Panc1 (cell line): ENCODE measurements at regions of chr15 and their contacts with region 1.

Region 1: DNA sequence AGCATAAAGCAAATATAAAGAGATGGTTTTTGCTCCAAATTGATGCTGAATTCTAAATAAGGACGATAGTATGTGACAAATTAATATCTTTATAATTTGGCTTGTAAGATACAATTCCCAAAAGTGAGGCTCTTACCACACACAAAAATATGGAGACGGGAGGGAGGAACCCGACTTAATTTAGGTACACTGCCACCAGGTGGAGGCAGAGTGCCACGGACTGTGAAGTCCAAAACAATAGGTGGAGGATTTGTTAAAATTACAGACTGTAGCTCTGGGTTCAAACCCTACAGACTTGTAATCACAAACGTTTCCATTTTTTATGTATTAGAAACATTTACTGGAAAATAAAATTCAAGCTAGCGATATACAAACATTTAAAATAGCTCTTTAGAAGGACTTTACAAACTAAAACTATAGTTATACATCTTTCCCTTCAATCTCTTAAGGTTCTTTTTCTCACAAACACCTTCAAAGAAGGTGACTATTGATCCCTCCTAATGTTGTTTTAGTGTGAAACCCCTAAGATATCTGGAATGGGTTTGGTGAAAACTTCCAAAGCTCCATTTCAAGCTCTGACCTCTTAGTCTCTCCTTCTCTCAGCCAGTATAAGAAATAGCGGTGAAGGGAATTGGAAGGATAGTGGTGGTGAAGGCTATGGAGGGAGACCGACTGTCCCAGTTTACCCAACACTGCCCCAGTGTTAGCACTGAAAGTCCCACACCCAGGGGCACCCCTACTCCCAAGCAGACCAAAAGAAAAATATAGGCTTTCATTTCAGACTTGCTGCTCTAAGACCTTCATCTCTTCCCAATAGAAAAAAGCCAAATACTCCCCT is 89.7 kb downstream of the AQP9 start:
- DNase-seq: peak; percentile 67
- ATAC-seq: peak; percentile 88
- H3K4me3 ChIP-seq: no peak overlapping the region
- H3K27ac ChIP-seq: no peak overlapping the region
- H3K4me1 ChIP-seq: peaks cover 3% of the 10 kb centered on the region; the same call in 1 of the 2 replicates
- H3K27me3 ChIP-seq: no peaks in the 10 kb centered on the region
- CTCF ChIP-seq: peak; percentile 91

Region 2: DNA sequence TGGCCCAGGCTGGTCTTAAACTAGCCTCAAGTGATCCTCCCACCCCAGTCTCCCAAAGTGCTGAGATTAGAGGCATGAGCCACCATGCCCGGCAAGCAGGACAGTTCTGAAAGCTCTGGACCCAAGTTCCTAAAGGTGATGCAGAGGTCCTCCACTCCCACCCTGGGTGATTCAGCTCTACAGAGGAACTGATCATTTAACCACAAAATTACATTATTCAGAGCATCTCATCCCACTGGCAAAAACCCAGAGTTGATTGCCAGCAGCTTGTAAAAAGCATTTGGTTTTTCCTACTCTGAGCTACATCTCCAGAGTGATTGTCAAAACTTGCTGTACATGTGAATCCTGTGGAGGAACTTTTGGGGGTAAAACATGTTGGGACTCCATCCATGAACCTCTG is 645.3 kb after region 1 on chr15:
- CTCF ChIA-PET with region 1: no interaction called
- POLR2A ChIA-PET with region 1: no interaction called
- in situ Hi-C with region 1: no loop called
- intact Hi-C with region 1: loop called (anchors 10 kb)
- DNase-seq: no peak
- ATAC-seq: no peak
- H3K4me3 ChIP-seq: no peak overlapping the region
- H3K27ac ChIP-seq: no peak overlapping the region
- H3K4me1 ChIP-seq: no peaks in the 10 kb centered on the region
- H3K27me3 ChIP-seq: no peaks in the 10 kb centered on the region
- CTCF ChIP-seq: no peak

Region 3: GRCh38 chr15:58966698-58967097 is 738.8 kb after region 1 on chr15:
- CTCF ChIA-PET with region 1: no interaction called
- POLR2A ChIA-PET with region 1: no interaction called
- in situ Hi-C with region 1: no loop called
- intact Hi-C with region 1: loop called (anchors 5 kb)
- DNase-seq: no peak
- ATAC-seq: no peak
- H3K4me3 ChIP-seq: no peak overlapping the region
- H3K27ac ChIP-seq: no peak overlapping the region
- H3K4me1 ChIP-seq: no peaks in the 10 kb centered on the region
- H3K27me3 ChIP-seq: no peaks in the 10 kb centered on the region
- CTCF ChIP-seq: no peak

Region 4: GRCh38 chr15:59360305-59360704 is 1132.4 kb after region 1 on chr15:
- CTCF ChIA-PET with region 1: no interaction called
- POLR2A ChIA-PET with region 1: no interaction called
- in situ Hi-C with region 1: no loop called
- intact Hi-C with region 1: no loop called
- DNase-seq: no peak
- ATAC-seq: no peak
- H3K4me3 ChIP-seq: no peak overlapping the region
- H3K27ac ChIP-seq: no peak overlapping the region
- H3K4me1 ChIP-seq: no peaks in the 10 kb centered on the region; the same call in none of the 2 replicates
- H3K27me3 ChIP-seq: no peaks in the 10 kb centered on the region
- CTCF ChIP-seq: no peak; the same call in 1 of the 2 replicates